ENCODE measurements at regions of chr12 and their contacts with region 1.

Region 1: GRCh38 chr12:120228291-120229070 is 27.6 kb upstream of the RPLP0 start:
- DNase-seq: peak; percentile 97 to 99
- H3K4me3 ChIP-seq: peak overlapping the region; percentile 34
- H3K4me3 Mint-ChIP-seq: peak overlapping the region; percentile 67
- H3K27ac Mint-ChIP-seq: peak overlapping the region; percentile 84
- H3K4me1 ChIP-seq: peaks cover 78% of the 10 kb centered on the region
- H3K4me1 Mint-ChIP-seq: peaks cover 43% of the 10 kb centered on the region
- H3K27me3 ChIP-seq: no peaks in the 10 kb centered on the region
- H3K27me3 Mint-ChIP-seq: no peaks in the 10 kb centered on the region
- CTCF ChIP-seq: peak; percentile 84 to 94

Region 2: DNA sequence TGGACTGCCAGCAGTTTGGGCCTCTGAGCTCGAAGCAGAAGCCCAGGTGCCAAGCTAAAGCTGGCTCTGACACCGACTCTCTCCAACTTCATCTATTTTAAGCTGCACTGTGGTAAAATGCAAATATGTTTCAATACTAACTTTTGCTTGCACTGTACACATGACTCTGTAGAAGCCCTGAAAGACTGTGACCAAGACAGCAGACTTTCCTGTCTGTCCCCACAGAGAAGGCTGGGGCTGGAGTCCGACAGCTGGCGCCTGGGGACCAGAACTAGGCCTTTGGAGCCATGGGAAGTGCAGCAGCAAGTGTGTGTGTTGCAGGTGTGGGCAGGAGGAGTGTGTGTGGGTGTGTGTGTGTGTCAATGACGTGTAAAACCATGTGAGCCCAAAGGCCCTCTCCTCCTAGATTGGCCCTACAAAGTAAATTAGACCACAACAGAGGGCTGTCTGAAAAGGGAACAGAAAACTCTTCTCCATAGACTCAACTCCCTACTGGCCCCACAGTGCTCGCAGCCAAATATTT is 95.6 kb before region 1 on chr12:
- CTCF ChIA-PET with region 1: no interaction called
- POLR2A ChIA-PET with region 1: no interaction called
- intact Hi-C with region 1: no loop called
- DNase-seq: no peak
- H3K4me3 ChIP-seq: no peak overlapping the region
- H3K4me3 Mint-ChIP-seq: no peak overlapping the region
- H3K27ac Mint-ChIP-seq: no peak overlapping the region
- H3K4me1 ChIP-seq: no peaks in the 10 kb centered on the region
- H3K4me1 Mint-ChIP-seq: no peaks in the 10 kb centered on the region
- H3K27me3 ChIP-seq: no peaks in the 10 kb centered on the region
- H3K27me3 Mint-ChIP-seq: no peaks in the 10 kb centered on the region
- CTCF ChIP-seq: no peak

Region 3: GRCh38 chr12:120242275-120242799 is 13.9 kb after region 1 on chr12:
- CTCF ChIA-PET with region 1: interaction called, 29 read pairs
- POLR2A ChIA-PET with region 1: interaction called, 4 read pairs
- intact Hi-C with region 1: no loop called
- DNase-seq: no peak
- H3K4me3 ChIP-seq: no peak overlapping the region
- H3K4me3 Mint-ChIP-seq: no peak overlapping the region
- H3K27ac Mint-ChIP-seq: peak overlapping the region; percentile 58
- H3K4me1 ChIP-seq: peaks cover 31% of the 10 kb centered on the region
- H3K4me1 Mint-ChIP-seq: peaks cover 32% of the 10 kb centered on the region
- H3K27me3 ChIP-seq: no peaks in the 10 kb centered on the region
- H3K27me3 Mint-ChIP-seq: no peaks in the 10 kb centered on the region
- CTCF ChIP-seq: no peak

Region 4: DNA sequence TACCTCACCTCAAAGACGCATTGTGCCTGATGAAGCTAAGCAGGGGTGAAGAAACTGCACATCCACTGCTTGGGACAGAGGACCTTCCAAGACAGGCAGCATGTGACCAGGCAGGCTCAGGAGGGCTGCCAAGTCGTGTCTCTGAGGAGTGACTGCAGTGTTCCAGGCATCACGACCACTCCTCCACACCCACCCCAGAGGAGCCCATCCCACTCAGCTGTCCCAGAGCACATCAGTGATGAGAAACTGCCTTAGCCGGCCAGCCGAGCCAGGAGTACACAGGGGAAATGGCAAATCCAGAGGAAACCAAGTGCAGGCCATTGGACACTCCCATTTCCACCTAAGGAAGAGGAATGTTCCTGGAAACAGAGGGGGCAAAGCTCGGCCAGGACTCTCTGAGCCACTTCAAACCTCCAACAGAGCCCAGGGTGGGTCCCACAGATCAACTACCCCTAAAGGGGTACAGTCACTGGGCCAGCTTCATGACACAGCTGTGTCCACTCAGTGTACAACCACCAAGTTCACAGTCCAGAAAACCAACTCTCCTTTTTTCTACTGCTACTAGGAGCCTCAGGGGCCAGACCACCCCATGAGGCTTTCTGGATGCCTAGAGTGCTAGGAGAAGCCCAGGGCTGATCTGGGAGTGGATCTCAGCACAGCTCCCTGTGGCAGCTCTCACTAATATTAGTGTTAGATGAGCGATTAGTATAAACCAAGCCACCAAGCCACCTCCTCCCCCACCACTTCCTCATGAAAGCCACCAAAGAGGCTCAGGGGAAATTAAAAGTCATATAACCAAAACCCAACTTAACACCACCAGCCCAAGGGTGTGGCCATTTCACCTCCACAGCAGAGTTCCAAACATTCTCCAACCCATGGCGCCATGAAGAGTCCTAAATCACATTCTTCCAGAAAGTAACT is 21.7 kb after region 1 on chr12:
- CTCF ChIA-PET with region 1: interaction called, 8 read pairs
- POLR2A ChIA-PET with region 1: interaction called, 3 read pairs
- intact Hi-C with region 1: loop called (anchors 2 kb)
- DNase-seq: no peak
- H3K4me3 ChIP-seq: no peak overlapping the region
- H3K4me3 Mint-ChIP-seq: no peak overlapping the region
- H3K27ac Mint-ChIP-seq: no peak overlapping the region
- H3K4me1 ChIP-seq: peaks cover 45% of the 10 kb centered on the region
- H3K4me1 Mint-ChIP-seq: peaks cover 40% of the 10 kb centered on the region
- H3K27me3 ChIP-seq: no peaks in the 10 kb centered on the region
- H3K27me3 Mint-ChIP-seq: no peaks in the 10 kb centered on the region
- CTCF ChIP-seq: no peak

Region 5: GRCh38 chr12:120257041-120257821 is 28.8 kb after region 1 on chr12:
- CTCF ChIA-PET with region 1: interaction called, 229 read pairs
- POLR2A ChIA-PET with region 1: interaction called, 10 read pairs
- intact Hi-C with region 1: no loop called
- DNase-seq: no peak
- H3K4me3 ChIP-seq: no peak overlapping the region
- H3K4me3 Mint-ChIP-seq: no peak overlapping the region
- H3K27ac Mint-ChIP-seq: peak overlapping the region; percentile 76
- H3K4me1 ChIP-seq: peaks cover 27% of the 10 kb centered on the region
- H3K4me1 Mint-ChIP-seq: peaks cover 21% of the 10 kb centered on the region
- H3K27me3 ChIP-seq: no peaks in the 10 kb centered on the region
- H3K27me3 Mint-ChIP-seq: no peaks in the 10 kb centered on the region
- CTCF ChIP-seq: no peak

Region 6: DNA sequence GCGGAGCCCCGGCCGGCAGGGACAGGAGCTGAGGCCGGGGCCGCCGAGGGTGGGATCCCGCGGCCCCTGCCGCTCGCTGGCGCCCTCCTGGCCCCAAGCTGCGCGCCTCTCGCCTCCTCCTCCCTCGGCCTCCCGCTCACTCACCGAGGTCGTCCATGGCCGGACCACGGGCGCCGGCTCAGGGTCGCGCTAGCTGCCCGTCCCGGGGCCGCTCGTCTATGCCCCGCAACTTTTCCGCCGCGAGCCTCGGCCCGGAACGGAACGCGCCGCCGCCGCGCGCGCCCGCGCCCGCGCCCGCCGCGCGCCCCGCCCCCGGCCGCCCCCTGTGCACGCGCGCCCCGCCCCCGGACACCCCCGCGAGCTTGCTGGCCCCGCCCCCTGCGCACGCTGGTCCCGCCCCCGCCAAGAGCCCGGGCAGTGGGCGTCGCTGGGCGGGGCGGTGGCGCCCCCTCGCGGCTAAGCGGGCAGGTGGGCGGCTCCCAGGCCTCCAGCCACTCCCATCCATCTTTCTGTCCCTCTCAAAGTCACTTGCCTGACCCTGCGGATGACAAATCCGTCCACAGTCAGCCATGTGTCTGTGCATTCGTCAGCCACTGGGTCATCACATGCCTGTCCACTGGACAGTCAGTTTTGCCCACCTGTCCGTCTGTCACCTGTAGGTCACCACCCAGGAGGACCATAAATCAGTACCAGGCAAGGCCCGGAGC is 37.1 kb after region 1 on chr12 and contains the start of gene PXN:
- CTCF ChIA-PET with region 1: interaction called, 229 read pairs
- POLR2A ChIA-PET with region 1: interaction called, 117 read pairs
- intact Hi-C with region 1: loop called (anchors 1 kb)
- DNase-seq: peak; percentile 85 to 95
- H3K4me3 ChIP-seq: peak within 1 kb of the TSS; percentile 96
- H3K4me3 Mint-ChIP-seq: peak within 1 kb of the TSS; percentile 91
- H3K27ac Mint-ChIP-seq: peak within 1 kb of the TSS; percentile 86
- H3K4me1 ChIP-seq: peaks cover 42% of the 10 kb centered on the region
- H3K4me1 Mint-ChIP-seq: peaks cover 14% of the 10 kb centered on the region
- H3K27me3 ChIP-seq: no peaks in the 10 kb centered on the region
- H3K27me3 Mint-ChIP-seq: no peaks in the 10 kb centered on the region
- CTCF ChIP-seq: peak; percentile 66 to 84
- total RNA-seq, gene PXN: 150 and 162 TPM in 2 replicates

Region 7: GRCh38 chr12:120286796-120287465 is 58.5 kb after region 1 on chr12:
- CTCF ChIA-PET with region 1: interaction called, 30 read pairs
- POLR2A ChIA-PET with region 1: interaction called, 297 read pairs
- intact Hi-C with region 1: loop called (anchors 1 kb)
- DNase-seq: peak in 1 of 2 experiments; percentile 53
- H3K4me3 ChIP-seq: no peak overlapping the region
- H3K4me3 Mint-ChIP-seq: peak overlapping the region; percentile 35
- H3K27ac Mint-ChIP-seq: peak overlapping the region; percentile 92
- H3K4me1 ChIP-seq: peaks cover 39% of the 10 kb centered on the region
- H3K4me1 Mint-ChIP-seq: peaks cover 45% of the 10 kb centered on the region
- H3K27me3 ChIP-seq: no peaks in the 10 kb centered on the region
- H3K27me3 Mint-ChIP-seq: no peaks in the 10 kb centered on the region
- CTCF ChIP-seq: no peak

Region 8: GRCh38 chr12:120292661-120293531 is 64.4 kb after region 1 on chr12 and contains the start of gene RNU4-1:
- CTCF ChIA-PET with region 1: interaction called, 30 read pairs
- POLR2A ChIA-PET with region 1: interaction called, 297 read pairs
- intact Hi-C with region 1: loop called (anchors 1 kb)
- DNase-seq: peak; percentile 89 to 93
- H3K4me3 ChIP-seq: peak within 1 kb of the TSS; percentile 48
- H3K4me3 Mint-ChIP-seq: peak within 1 kb of the TSS; percentile 14
- H3K27ac Mint-ChIP-seq: no peak within 1 kb of the TSS
- H3K4me1 ChIP-seq: peaks cover 7% of the 10 kb centered on the region
- H3K4me1 Mint-ChIP-seq: no peaks in the 10 kb centered on the region
- H3K27me3 ChIP-seq: no peaks in the 10 kb centered on the region
- H3K27me3 Mint-ChIP-seq: no peaks in the 10 kb centered on the region
- CTCF ChIP-seq: no peak
- total RNA-seq, gene RNU4-1: 3,380 and 3,645 TPM in 2 replicates

Measured in Caco-2 (cell line).